ENCODE measurements at regions of chr20 and their contacts with region 1.

Region 1: GRCh38 chr20:3888622-3889488 is at the start of gene PANK2:
- DNase-seq: peak; percentile 98
- H3K4me3 Mint-ChIP-seq: peak within 1 kb of the TSS; percentile 99
- H3K27ac Mint-ChIP-seq: peak within 1 kb of the TSS; percentile 93
- H3K4me1 Mint-ChIP-seq: peaks cover 37% of the 10 kb centered on the region
- H3K27me3 Mint-ChIP-seq: no peaks in the 10 kb centered on the region
- total RNA-seq, gene PANK2: 49.2 and 51.4 TPM in 2 replicates

Region 2: GRCh38 chr20:3911956-3912355 is 23.1 kb after region 1 on chr20:
- intact Hi-C with region 1: loop called (anchors 1 kb)
- DNase-seq: no peak
- H3K4me3 Mint-ChIP-seq: no peak overlapping the region
- H3K27ac Mint-ChIP-seq: no peak overlapping the region
- H3K4me1 Mint-ChIP-seq: peaks cover 43% of the 10 kb centered on the region
- H3K27me3 Mint-ChIP-seq: no peaks in the 10 kb centered on the region